AG04450 (cell line): ENCODE measurements at regions of chr5 and their contacts with region 1.

Region 1: DNA sequence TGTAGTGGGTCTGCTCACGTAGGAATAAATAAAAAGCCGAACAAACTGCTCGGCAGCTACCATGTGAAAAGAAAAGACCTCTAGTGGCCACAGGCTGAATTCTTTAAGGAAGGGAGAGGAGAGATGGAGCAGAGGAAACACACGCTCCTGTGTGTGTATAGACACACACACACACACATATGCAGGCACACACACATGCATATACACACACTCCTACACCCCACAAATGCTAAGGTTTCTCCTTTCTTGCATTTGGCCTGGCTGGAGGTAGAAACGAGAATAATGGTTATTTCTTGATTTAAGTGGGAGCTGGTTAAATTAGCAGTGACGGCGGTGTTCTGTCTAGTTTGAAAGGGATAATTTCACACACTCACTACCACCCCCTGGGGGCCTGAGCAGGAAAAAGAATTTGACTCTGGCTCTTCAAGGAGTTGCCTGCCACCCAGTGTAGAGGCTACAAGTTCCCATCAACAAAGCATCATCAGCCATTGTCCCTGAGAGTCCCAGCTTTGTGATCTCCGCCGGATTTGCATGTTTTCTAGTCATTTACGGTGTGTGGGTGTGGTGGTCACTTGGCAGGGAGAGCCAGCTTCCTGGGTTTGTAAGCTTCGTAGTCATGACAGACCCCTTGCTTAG is at the start of gene INSYN2B:
- DNase-seq: peak; percentile 71
- H3K4me3 ChIP-seq: peak within 1 kb of the TSS; percentile 76
- H3K27ac ChIP-seq: peak within 1 kb of the TSS; percentile 57
- H3K27me3 ChIP-seq: no peaks in the 10 kb centered on the region
- CTCF ChIP-seq: peak; percentile 66
- polyA plus RNA-seq, gene INSYN2B: 6.1 and 6.8 TPM in 2 replicates

Region 2: GRCh38 chr5:169670769-169671525 is 309.6 kb before region 1 on chr5:
- CTCF ChIA-PET with region 1: interaction called, 16 read pairs
- POLR2A ChIA-PET with region 1: no interaction called
- DNase-seq: no peak
- H3K4me3 ChIP-seq: no peak overlapping the region
- H3K27ac ChIP-seq: no peak overlapping the region
- H3K27me3 ChIP-seq: no peaks in the 10 kb centered on the region
- CTCF ChIP-seq: no peak

Region 3: GRCh38 chr5:169723103-169723831 is 257.3 kb before region 1 on chr5:
- CTCF ChIA-PET with region 1: interaction called, 15 read pairs
- POLR2A ChIA-PET with region 1: no interaction called
- DNase-seq: no peak
- H3K4me3 ChIP-seq: no peak overlapping the region
- H3K27ac ChIP-seq: no peak overlapping the region
- H3K27me3 ChIP-seq: no peaks in the 10 kb centered on the region
- CTCF ChIP-seq: no peak

Region 4: DNA sequence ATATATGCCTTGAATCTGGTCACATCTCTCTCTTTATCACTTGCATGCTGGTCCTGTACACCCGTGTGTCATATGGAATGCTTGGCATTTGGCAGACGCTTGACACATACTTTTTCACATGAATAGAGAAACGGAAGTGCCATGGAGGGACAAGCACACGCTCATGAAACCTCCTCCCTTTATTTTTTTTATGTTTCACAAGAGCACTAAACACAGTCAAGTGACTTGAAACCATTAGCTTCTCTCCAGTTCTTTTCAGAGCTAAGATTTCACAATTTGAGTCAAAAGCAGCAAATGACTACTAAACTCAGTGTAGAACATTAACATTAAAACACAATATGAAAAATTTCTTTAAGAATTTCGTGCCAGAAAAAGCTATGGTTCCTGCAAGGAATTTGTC is 192.4 kb before region 1 on chr5:
- CTCF ChIA-PET with region 1: interaction called, 21 read pairs
- POLR2A ChIA-PET with region 1: no interaction called
- DNase-seq: no peak
- H3K4me3 ChIP-seq: no peak overlapping the region
- H3K27ac ChIP-seq: no peak overlapping the region
- H3K27me3 ChIP-seq: no peaks in the 10 kb centered on the region
- CTCF ChIP-seq: no peak

Region 5: GRCh38 chr5:169873642-169874041 is 106.9 kb before region 1 on chr5:
- CTCF ChIA-PET with region 1: interaction called, 12 read pairs
- POLR2A ChIA-PET with region 1: no interaction called
- DNase-seq: no peak
- H3K4me3 ChIP-seq: no peak overlapping the region
- H3K27ac ChIP-seq: no peak overlapping the region
- H3K27me3 ChIP-seq: no peaks in the 10 kb centered on the region
- CTCF ChIP-seq: no peak

Region 6: GRCh38 chr5:169934990-169935389 is 45.5 kb before region 1 on chr5:
- CTCF ChIA-PET with region 1: interaction called, 22 read pairs
- POLR2A ChIA-PET with region 1: no interaction called
- DNase-seq: peak; percentile 41
- H3K4me3 ChIP-seq: no peak overlapping the region
- H3K27ac ChIP-seq: no peak overlapping the region
- H3K27me3 ChIP-seq: no peaks in the 10 kb centered on the region
- CTCF ChIP-seq: no peak